B cell (primary cell): ENCODE measurements at regions of chr6 and their contacts with region 1.

Region 1: DNA sequence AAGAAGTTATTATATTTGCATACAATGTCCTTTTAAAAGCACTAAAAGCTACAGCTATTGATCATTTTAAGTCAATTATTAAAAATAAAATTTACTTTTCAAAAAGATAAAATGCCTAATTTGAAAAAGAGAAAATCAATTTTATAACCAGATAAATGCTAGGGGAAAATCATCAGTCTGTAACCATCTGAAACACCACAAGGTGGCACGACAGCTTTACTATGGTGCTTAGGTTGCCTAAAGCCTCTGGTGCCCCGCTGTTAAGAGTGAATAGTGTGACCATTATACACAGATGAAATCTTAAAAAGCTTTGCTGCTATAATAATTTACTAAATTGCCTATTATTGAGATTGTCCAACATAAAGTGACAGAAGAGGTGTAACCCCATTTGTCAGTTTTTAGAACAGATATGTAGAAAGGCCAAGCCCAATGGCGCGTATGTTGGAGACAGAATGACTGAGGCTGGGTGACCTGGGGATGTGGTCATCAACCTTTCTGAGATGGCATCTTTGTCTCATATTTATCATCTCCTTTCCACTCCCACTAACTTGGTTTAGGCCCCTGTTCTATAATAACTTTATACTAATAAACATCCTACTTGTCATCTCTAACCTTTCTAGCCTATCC is 100.8 kb downstream of the MOXD1 start:
- DNase-seq: peak; percentile 73
- ATAC-seq: peak; percentile 96
- H3K4me3 ChIP-seq: no peak overlapping the region
- H3K4me3 Mint-ChIP-seq: no peak overlapping the region
- H3K27ac ChIP-seq: no peak overlapping the region
- H3K27ac Mint-ChIP-seq: no peak overlapping the region
- H3K4me1 ChIP-seq: no peaks in the 10 kb centered on the region
- H3K4me1 Mint-ChIP-seq: no peaks in the 10 kb centered on the region
- H3K27me3 ChIP-seq: no peaks in the 10 kb centered on the region
- H3K27me3 Mint-ChIP-seq: no peaks in the 10 kb centered on the region
- CTCF ChIP-seq: peak; percentile 81

Region 2: GRCh38 chr6:132270726-132271402 is 29.6 kb before region 1 on chr6:
- CTCF ChIA-PET with region 1: interaction called, 530 read pairs
- POLR2A ChIA-PET with region 1: no interaction called
- intact Hi-C with region 1: no loop called
- DNase-seq: no peak
- ATAC-seq: no peak
- H3K4me3 ChIP-seq: no peak overlapping the region
- H3K4me3 Mint-ChIP-seq: no peak overlapping the region
- H3K27ac ChIP-seq: no peak overlapping the region
- H3K27ac Mint-ChIP-seq: no peak overlapping the region
- H3K4me1 ChIP-seq: peaks cover 24 to 29% of the 10 kb centered on the region in 2 donors
- H3K4me1 Mint-ChIP-seq: peaks cover 30% of the 10 kb centered on the region
- H3K27me3 ChIP-seq: no peaks in the 10 kb centered on the region
- H3K27me3 Mint-ChIP-seq: peaks cover 4% of the 10 kb centered on the region
- CTCF ChIP-seq: no peak

Region 3: GRCh38 chr6:132354512-132355167 is 54.2 kb after region 1 on chr6:
- CTCF ChIA-PET with region 1: interaction called, 22 read pairs
- POLR2A ChIA-PET with region 1: interaction called, 4 read pairs
- intact Hi-C with region 1: loop called (anchors 2 kb)
- DNase-seq: peak; percentile 94
- ATAC-seq: peak; percentile 87
- H3K4me3 ChIP-seq: peak overlapping the region in 4 of 5 experiments; percentile 10 to 37 (median 17)
- H3K4me3 Mint-ChIP-seq: peak overlapping the region; percentile 67
- H3K27ac ChIP-seq: peak overlapping the region; percentile 89 to 95
- H3K27ac Mint-ChIP-seq: peak overlapping the region; percentile 89
- H3K4me1 ChIP-seq: peaks cover 43 to 63% of the 10 kb centered on the region in 2 donors
- H3K4me1 Mint-ChIP-seq: peaks cover 67% of the 10 kb centered on the region
- H3K27me3 ChIP-seq: no peaks in the 10 kb centered on the region
- H3K27me3 Mint-ChIP-seq: no peaks in the 10 kb centered on the region
- CTCF ChIP-seq: no peak

Region 4: GRCh38 chr6:132391391-132392271 is 91.2 kb after region 1 on chr6:
- CTCF ChIA-PET with region 1: interaction called, 215 read pairs
- POLR2A ChIA-PET with region 1: interaction called, 4 read pairs
- intact Hi-C with region 1: loop called (anchors 1 kb)
- DNase-seq: no peak
- ATAC-seq: no peak
- H3K4me3 ChIP-seq: no peak overlapping the region
- H3K4me3 Mint-ChIP-seq: no peak overlapping the region
- H3K27ac ChIP-seq: no peak overlapping the region
- H3K27ac Mint-ChIP-seq: no peak overlapping the region
- H3K4me1 ChIP-seq: peaks cover 5 to 27% of the 10 kb centered on the region in 2 donors
- H3K4me1 Mint-ChIP-seq: peaks cover 27% of the 10 kb centered on the region
- H3K27me3 ChIP-seq: no peaks in the 10 kb centered on the region
- H3K27me3 Mint-ChIP-seq: no peaks in the 10 kb centered on the region
- CTCF ChIP-seq: no peak

Region 5: DNA sequence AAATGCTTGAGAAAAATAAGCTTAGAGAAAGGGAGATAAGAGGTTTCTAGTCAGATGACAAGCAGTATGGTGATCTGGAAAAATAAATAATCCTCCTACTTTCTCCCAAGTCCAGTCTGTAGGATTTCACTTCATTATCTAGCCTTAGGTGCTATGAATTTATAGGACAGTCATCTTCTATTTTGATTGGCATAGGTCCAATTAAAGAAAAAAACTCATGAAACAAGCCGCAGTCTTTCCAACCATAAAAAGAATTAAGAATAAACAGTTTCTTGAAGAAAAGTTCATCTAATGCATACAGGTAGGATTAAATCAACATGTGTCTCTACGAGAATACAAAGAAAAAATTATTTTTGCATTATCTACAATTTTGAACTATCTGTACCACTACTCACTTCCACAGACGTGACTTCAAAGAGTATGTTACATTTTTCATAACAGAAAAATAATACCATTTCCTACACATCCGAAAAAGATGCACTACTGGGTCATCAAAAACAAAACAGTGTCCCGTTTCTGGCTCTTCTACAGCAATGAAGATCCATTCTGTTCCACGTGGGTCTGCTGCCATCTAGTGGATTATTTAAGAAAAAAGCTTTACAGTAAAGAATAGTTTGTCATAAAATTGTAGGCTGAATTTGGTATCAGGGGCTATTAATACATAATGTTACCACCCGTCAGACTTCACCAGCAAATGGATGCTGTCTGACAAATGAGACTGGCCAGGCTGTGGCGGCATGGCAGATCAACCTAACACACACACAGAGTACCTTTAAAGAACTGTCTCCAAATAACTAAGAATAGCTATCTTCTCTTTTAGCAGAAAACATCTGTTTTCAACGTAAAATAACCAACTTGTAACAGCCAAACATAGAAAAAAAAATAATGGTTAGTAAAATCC is 183.6 kb after region 1 on chr6:
- CTCF ChIA-PET with region 1: interaction called, 222 read pairs
- POLR2A ChIA-PET with region 1: interaction called, 3 read pairs
- intact Hi-C with region 1: loop called (anchors 1 kb)
- DNase-seq: peak; percentile 83
- ATAC-seq: peak; percentile 78
- H3K4me3 ChIP-seq: peak overlapping the region in 1 of 5 experiments; percentile 5
- H3K4me3 Mint-ChIP-seq: peak overlapping the region; percentile 41
- H3K27ac ChIP-seq: peak overlapping the region; percentile 27 to 92
- H3K27ac Mint-ChIP-seq: peak overlapping the region; percentile 75
- H3K4me1 ChIP-seq: peaks cover 59 to 88% of the 10 kb centered on the region in 2 donors
- H3K4me1 Mint-ChIP-seq: peaks cover 85% of the 10 kb centered on the region
- H3K27me3 ChIP-seq: no peaks in the 10 kb centered on the region
- H3K27me3 Mint-ChIP-seq: no peaks in the 10 kb centered on the region
- CTCF ChIP-seq: peak; percentile 84

Region 6: DNA sequence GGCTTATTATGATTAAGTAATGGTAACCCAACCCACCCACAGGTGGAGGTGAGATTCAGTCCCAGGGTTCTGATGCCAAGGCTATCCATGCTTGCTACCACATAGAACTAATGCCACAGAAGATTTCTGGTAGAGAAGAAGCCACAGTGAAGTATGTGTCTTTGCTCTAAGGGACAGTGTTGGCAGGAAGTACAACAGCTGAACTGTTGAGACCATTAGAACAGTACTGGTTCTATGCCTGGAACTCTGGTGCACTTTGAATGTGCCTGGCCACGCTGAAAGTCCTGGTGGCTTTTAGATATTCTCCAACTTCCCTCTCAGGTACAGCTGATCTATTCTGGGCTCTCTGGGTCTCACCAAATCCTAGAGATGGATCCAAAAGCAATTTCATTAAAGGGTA is 204.7 kb after region 1 on chr6:
- CTCF ChIA-PET with region 1: no interaction called
- POLR2A ChIA-PET with region 1: no interaction called
- intact Hi-C with region 1: no loop called
- DNase-seq: no peak
- ATAC-seq: no peak
- H3K4me3 ChIP-seq: peak overlapping the region in 2 of 5 experiments; percentile 4 to 25
- H3K4me3 Mint-ChIP-seq: peak overlapping the region; percentile 52
- H3K27ac ChIP-seq: peak overlapping the region; percentile 28 to 88
- H3K27ac Mint-ChIP-seq: peak overlapping the region; percentile 43
- H3K4me1 ChIP-seq: peaks cover 83 to 88% of the 10 kb centered on the region in 2 donors
- H3K4me1 Mint-ChIP-seq: peaks cover 91% of the 10 kb centered on the region
- H3K27me3 ChIP-seq: no peaks in the 10 kb centered on the region
- H3K27me3 Mint-ChIP-seq: no peaks in the 10 kb centered on the region
- CTCF ChIP-seq: no peak